ENCODE measurements at regions of chr7 and their contacts with region 1.

Region 1: DNA sequence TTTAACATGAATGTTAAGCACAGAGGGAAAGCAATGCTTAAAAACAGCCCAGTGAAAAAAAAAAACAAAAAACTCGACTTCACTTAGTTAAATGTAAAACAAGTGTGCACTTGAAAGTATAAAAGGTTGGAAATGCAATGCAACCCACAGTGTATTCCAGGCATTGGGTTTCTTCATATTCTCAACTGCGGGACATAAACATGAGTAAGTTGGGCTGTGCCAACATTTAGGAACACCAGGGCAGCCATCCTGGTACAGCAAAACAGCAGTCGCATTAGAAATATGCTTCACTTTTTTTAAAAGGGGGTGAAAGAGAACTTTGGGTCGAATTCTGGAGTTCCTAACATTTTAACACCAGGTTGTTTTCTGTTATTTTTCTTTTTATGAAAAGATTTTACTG is 937 bp downstream of the STEAP1 start:
- DNase-seq: no peak
- H3K4me3 ChIP-seq: peak overlapping the region in 3 of 4 donors; percentile 1 to 69 (median 49)
- H3K27ac ChIP-seq: no peak overlapping the region
- H3K4me1 ChIP-seq: peaks cover 0 to 14% (median 7%) of the 10 kb centered on the region in 4 donors
- H3K27me3 ChIP-seq: no peaks in the 10 kb centered on the region
- CTCF ChIP-seq: no peak
- EP300 ChIP-seq: no peak
- POLR2A ChIP-seq: no peak

Region 2: GRCh38 chr7:89798599-89798996 is 356.6 kb before region 1 on chr7:
- intact Hi-C with region 1: no loop called
- DNase-seq: no peak
- H3K4me3 ChIP-seq: no peak overlapping the region
- H3K27ac ChIP-seq: no peak overlapping the region
- H3K4me1 ChIP-seq: no peaks in the 10 kb centered on the region
- H3K27me3 ChIP-seq: no peaks in the 10 kb centered on the region
- CTCF ChIP-seq: no peak
- EP300 ChIP-seq: no peak
- POLR2A ChIP-seq: no peak

Region 3: DNA sequence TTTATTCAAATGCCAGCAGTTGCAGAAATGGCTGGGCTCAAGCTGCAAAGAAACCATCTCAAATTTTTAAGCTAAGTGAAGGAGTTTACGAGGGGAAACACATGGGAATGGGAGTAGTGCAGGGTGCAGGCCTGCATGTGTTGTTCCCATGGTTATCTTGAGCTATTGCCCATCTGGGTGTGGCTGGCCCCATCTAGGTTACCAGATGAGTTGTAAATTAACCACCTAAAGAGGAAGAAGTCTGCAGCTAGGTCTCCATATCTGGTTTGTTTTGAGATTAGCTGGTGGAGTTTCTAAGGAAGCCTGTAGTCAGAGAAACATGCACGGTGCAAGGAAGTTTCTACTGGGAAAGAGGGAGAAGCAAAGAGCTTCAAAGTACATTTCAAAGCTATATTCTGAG is 33.1 kb after region 1 on chr7:
- intact Hi-C with region 1: no loop called
- DNase-seq: peak in 1 of 2 donors; percentile 51
- H3K4me3 ChIP-seq: no peak overlapping the region
- H3K27ac ChIP-seq: peak overlapping the region in 4 of 5 donors; percentile 12 to 61 (median 47)
- H3K4me1 ChIP-seq: peaks cover 0 to 14% (median 8%) of the 10 kb centered on the region in 4 donors
- H3K27me3 ChIP-seq: no peaks in the 10 kb centered on the region
- CTCF ChIP-seq: no peak
- EP300 ChIP-seq: no peak
- POLR2A ChIP-seq: no peak

Region 4: DNA sequence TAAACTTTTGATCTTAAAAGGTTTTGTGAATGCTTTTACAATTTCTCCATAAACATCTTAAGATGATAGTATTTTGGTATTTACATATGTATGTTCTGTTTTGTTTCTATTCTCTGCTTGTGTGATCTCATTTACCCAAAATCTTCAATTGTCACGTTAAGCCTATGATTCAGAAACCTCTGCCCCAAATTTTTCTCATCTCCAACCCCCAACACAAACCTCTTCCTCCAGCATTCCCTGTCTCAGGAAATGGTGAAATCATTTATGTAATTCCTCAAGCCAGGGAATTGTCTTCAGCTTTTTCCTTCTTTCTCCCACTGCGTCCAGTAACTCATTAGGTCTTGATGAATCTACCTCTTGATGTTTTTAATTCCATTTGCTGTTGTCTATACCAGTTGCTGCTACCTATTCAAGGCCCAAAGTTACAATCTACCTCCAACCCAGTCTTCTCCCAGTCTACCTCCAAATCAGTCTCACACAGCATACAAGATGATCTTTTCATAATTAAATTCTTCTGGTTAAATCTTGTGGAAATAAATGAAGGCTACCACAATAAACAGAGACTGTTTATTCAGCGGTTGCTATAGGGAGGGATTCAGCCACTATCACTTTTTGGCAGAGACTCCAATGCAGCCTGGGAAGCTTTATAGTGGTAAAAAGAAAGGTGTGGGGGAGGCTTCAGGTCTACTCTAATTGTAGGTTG is 95.5 kb after region 1 on chr7:
- intact Hi-C with region 1: loop called (anchors 10 kb)
- DNase-seq: no peak
- H3K4me3 ChIP-seq: no peak overlapping the region
- H3K27ac ChIP-seq: no peak overlapping the region
- H3K4me1 ChIP-seq: peaks cover 0 to 11% (median 9%) of the 10 kb centered on the region in 4 donors
- H3K27me3 ChIP-seq: no peaks in the 10 kb centered on the region
- CTCF ChIP-seq: no peak
- EP300 ChIP-seq: no peak
- POLR2A ChIP-seq: no peak

Measured in stomach (tissue), 19 donors.